Activated CD8-positive, alpha-beta T cell treated with anti-CD3 and anti-CD28 coated beads for 36 hours (primary cell): ENCODE measurements at regions of chr5 and their contacts with region 1.

Region 1: GRCh38 chr5:40688127-40688761 is 8.5 kb downstream of the PTGER4 start:
- DNase-seq: peak; percentile 95
- ATAC-seq: peak; percentile 70
- H3K4me3 Mint-ChIP-seq: peak overlapping the region; percentile 99
- H3K27ac Mint-ChIP-seq: peak overlapping the region; percentile 88
- H3K4me1 Mint-ChIP-seq: peaks cover 62% of the 10 kb centered on the region
- H3K27me3 Mint-ChIP-seq: no peaks in the 10 kb centered on the region
- CTCF ChIP-seq: peak; percentile 81

Region 2: GRCh38 chr5:39209924-39210323 is 1478.3 kb before region 1 on chr5:
- CTCF ChIA-PET with region 1: no interaction called
- POLR2A ChIA-PET with region 1: no interaction called
- intact Hi-C with region 1: loop called (anchors 10 kb)
- DNase-seq: peak; percentile 91
- ATAC-seq: peak; percentile 74
- H3K4me3 Mint-ChIP-seq: peak overlapping the region; percentile 71
- H3K27ac Mint-ChIP-seq: peak overlapping the region; percentile 94
- H3K4me1 Mint-ChIP-seq: peaks cover 87% of the 10 kb centered on the region
- H3K27me3 Mint-ChIP-seq: no peaks in the 10 kb centered on the region
- CTCF ChIP-seq: no peak

Region 3: GRCh38 chr5:40021007-40021406 is 667.2 kb before region 1 on chr5:
- CTCF ChIA-PET with region 1: no interaction called
- POLR2A ChIA-PET with region 1: no interaction called
- intact Hi-C with region 1: loop called (anchors 10 kb)
- DNase-seq: no peak
- ATAC-seq: no peak
- H3K4me3 Mint-ChIP-seq: no peak overlapping the region
- H3K27ac Mint-ChIP-seq: no peak overlapping the region
- H3K4me1 Mint-ChIP-seq: no peaks in the 10 kb centered on the region
- H3K27me3 Mint-ChIP-seq: peaks cover 7% of the 10 kb centered on the region
- CTCF ChIP-seq: no peak

Region 4: DNA sequence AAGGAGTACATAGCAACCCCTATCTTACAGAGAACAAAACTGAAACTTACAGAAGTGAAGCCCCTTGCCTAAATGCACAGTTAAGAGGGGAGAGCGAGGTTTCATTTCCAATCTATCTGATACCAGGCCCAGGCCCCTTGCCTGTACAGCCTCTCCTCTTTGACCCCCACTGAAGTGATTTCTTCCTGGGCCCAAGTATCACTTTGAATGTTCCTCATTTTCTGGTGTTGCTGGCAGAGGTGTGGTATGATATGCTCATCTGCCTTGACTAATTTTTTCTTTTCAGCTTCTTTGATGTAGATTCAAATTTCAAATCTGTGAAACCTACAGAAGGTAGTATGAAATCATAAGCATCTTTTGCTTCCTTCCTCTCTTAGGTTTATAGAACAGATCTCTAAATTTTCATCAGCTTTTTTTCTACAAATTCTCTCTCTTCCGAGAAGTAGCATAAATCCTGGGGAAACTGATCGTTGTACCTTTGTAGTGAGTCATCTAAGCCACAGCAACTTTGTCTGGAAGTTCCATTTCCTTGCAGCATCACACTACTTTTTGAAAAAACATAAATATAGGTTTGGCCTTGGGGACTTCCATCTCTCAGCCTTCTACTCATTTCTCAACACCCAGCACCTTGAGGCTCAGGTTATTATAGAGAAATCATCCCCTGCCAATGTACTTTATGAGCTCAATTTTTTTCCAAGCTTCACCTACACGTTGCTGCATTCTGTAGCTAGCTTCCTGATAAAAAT is 410.9 kb before region 1 on chr5:
- CTCF ChIA-PET with region 1: interaction called, 6 read pairs
- POLR2A ChIA-PET with region 1: no interaction called
- intact Hi-C with region 1: loop called (anchors 2 kb)
- DNase-seq: peak; percentile 64
- ATAC-seq: peak; percentile 91
- H3K4me3 Mint-ChIP-seq: peak overlapping the region; percentile 28
- H3K27ac Mint-ChIP-seq: peak overlapping the region; percentile 97
- H3K4me1 Mint-ChIP-seq: peaks cover 45% of the 10 kb centered on the region
- H3K27me3 Mint-ChIP-seq: no peaks in the 10 kb centered on the region
- CTCF ChIP-seq: no peak

Region 5: GRCh38 chr5:40502736-40503135 is 185.5 kb before region 1 on chr5:
- CTCF ChIA-PET with region 1: interaction called, 3 read pairs
- POLR2A ChIA-PET with region 1: interaction called, 3 read pairs
- intact Hi-C with region 1: loop called (anchors 2 kb)
- DNase-seq: no peak
- ATAC-seq: no peak
- H3K4me3 Mint-ChIP-seq: no peak overlapping the region
- H3K27ac Mint-ChIP-seq: no peak overlapping the region
- H3K4me1 Mint-ChIP-seq: peaks cover 15% of the 10 kb centered on the region
- H3K27me3 Mint-ChIP-seq: no peaks in the 10 kb centered on the region
- CTCF ChIP-seq: no peak

Region 6: DNA sequence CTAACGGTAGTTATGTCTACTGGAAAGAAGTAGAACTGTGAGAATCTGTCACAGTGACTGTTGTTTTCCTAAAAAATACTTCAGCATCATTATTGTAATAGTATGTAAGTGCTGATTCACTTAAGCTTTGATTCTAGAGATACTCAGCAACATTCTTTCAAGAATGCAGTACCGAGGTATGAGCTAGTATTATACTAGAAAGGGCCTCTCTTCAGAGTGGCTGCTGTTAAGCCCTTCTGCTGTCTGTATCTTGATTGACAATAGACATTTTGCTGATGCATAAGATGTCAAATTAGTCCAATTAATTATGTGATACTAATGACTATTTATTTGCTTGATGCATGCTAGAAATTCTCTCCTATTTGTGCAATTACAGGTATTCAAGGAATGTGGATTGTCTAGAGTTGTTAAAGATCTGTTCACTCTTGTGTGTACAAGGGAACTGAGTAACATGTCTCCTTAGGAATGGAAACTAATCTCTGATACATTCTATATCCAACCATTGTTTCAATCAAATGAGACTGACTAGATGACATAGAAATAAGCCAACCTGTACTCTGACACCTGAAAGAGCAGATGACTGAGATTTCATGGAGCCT is 100.9 kb before region 1 on chr5:
- CTCF ChIA-PET with region 1: no interaction called
- POLR2A ChIA-PET with region 1: no interaction called
- intact Hi-C with region 1: no loop called
- DNase-seq: no peak
- ATAC-seq: no peak
- H3K4me3 Mint-ChIP-seq: no peak overlapping the region
- H3K27ac Mint-ChIP-seq: no peak overlapping the region
- H3K4me1 Mint-ChIP-seq: peaks cover 22% of the 10 kb centered on the region
- H3K27me3 Mint-ChIP-seq: no peaks in the 10 kb centered on the region
- CTCF ChIP-seq: no peak

Region 7: DNA sequence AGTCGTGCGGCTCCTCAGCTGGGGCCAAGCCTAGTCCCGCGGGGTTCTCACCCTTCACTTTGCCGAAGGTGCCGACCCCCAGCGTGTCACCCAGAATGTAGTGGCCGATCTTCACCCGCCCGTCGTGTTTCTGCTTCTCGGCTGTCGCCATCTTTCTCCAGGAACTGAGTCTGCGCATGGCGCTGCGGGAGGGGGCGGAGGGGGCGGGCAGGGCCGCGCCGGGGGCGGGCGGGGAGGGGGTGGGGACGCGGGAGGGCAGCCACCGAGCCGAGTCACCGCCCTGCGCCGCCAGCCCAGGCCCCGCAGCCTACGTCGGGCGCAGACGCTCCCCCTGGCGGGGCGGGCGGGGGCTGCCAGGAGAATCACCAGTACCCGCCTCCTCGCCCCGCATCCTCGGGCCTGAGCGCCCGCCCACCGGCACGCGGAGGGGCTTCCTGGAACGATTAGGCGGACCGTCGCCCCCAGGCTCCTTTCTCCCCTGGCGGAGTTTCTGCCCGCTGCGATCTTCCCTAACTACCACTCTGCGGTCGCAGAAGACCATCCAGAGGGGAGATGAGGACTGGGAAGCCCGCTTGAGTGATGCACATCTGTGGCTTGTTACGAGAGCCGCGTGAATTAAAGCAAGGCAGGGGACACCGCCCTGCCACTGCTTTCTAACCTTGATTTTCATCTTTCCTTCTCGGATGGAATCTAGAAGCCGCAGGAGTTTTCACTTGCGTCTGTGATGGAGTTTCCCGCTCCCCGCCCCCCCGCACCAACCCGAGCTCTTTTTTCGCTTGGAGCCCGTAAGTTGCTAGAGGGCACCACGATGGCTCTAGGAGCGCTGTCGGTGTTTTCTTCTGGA is 110.0 kb after region 1 on chr5 and contains the start of gene PRKAA1:
- CTCF ChIA-PET with region 1: no interaction called
- POLR2A ChIA-PET with region 1: no interaction called
- intact Hi-C with region 1: no loop called
- DNase-seq: peak; percentile 90
- ATAC-seq: peak; percentile 95
- H3K4me3 Mint-ChIP-seq: peak within 1 kb of the TSS; percentile 89
- H3K27ac Mint-ChIP-seq: peak within 1 kb of the TSS; percentile 87
- H3K4me1 Mint-ChIP-seq: peaks cover 38% of the 10 kb centered on the region
- H3K27me3 Mint-ChIP-seq: peaks cover 4% of the 10 kb centered on the region
- CTCF ChIP-seq: peak; percentile 69
- total RNA-seq, gene PRKAA1: 33.8 to 35.2 TPM